CD4-positive, alpha-beta T cell (primary cell): ENCODE measurements at regions of chr2 and their contacts with region 1.

Region 1: GRCh38 chr2:33583194-33583938 is 15.7 kb downstream of the FAM98A start:
- DNase-seq: peak in 9 of 14 experiments; percentile 1 to 69 (median 18)
- ATAC-seq: peak; percentile 57
- H3K4me3 ChIP-seq: no peak overlapping the region
- H3K4me3 Mint-ChIP-seq: no peak overlapping the region
- H3K27ac ChIP-seq: no peak overlapping the region
- H3K27ac Mint-ChIP-seq: no peak overlapping the region
- H3K4me1 ChIP-seq: no peaks in the 10 kb centered on the region
- H3K4me1 Mint-ChIP-seq: peaks cover 11% of the 10 kb centered on the region
- H3K27me3 ChIP-seq: no peaks in the 10 kb centered on the region
- H3K27me3 Mint-ChIP-seq: no peaks in the 10 kb centered on the region
- CTCF ChIP-seq: peak; percentile 94

Region 2: DNA sequence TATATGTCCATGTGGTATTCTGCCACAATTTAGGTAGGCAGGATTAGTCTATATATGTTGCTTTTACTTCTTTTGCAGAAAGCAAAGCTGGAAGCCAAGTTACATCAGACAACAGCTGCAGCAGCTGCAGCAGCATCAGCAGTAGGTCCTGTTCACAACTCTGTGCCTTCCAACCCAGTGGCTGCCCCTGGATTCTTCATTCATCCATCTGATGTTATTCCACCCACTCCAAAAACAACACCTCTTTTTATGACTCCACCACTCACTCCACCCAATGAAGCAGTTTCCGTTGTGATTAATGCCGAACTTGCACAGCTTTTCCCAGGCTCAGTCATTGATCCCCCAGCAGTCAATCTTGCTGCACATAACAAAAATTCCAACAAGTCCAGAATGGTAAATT is 1118.9 kb before region 1 on chr2:
- CTCF ChIA-PET with region 1: no interaction called
- POLR2A ChIA-PET with region 1: no interaction called
- intact Hi-C with region 1: no loop called
- DNase-seq: no peak
- ATAC-seq: no peak
- H3K4me3 ChIP-seq: no peak overlapping the region
- H3K4me3 Mint-ChIP-seq: no peak overlapping the region
- H3K27ac ChIP-seq: no peak overlapping the region
- H3K27ac Mint-ChIP-seq: no peak overlapping the region
- H3K4me1 ChIP-seq: no peaks in the 10 kb centered on the region
- H3K4me1 Mint-ChIP-seq: no peaks in the 10 kb centered on the region
- H3K27me3 ChIP-seq: no peaks in the 10 kb centered on the region
- H3K27me3 Mint-ChIP-seq: no peaks in the 10 kb centered on the region
- CTCF ChIP-seq: no peak

Region 3: DNA sequence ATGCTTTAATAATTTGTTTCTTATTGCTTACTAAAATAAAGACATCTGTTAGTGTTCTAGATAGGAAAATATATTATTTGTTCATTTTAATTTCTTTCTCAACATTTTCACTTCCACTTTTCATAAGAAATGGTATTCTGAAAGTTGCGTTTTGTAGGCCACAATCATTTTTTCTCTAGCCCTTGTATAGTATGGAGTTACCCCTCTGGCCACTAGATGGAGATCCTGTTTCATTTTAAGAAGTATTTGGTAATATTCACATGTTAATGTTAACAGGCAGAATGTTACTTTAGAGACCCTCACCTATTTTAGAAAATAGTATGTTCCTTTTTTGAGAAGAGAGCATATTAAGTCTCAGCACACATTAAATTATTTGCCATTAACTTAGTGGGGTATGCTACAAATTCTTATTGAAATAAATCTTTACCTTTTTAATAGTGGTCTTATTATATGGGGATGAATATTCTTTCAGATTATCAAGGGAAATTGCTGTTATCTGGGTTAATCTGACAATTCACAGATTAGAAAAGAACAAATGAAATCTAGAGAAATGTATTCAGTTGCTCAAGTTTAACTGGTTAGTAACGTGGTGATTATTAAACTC is 1029.4 kb before region 1 on chr2:
- CTCF ChIA-PET with region 1: no interaction called
- POLR2A ChIA-PET with region 1: no interaction called
- intact Hi-C with region 1: loop called (anchors 1 to 5 kb)
- DNase-seq: peak in 3 of 14 experiments; percentile 47 to 60 (median 58)
- ATAC-seq: peak; percentile 61
- H3K4me3 ChIP-seq: no peak overlapping the region
- H3K4me3 Mint-ChIP-seq: no peak overlapping the region
- H3K27ac ChIP-seq: no peak overlapping the region
- H3K27ac Mint-ChIP-seq: no peak overlapping the region
- H3K4me1 ChIP-seq: no peaks in the 10 kb centered on the region
- H3K4me1 Mint-ChIP-seq: no peaks in the 10 kb centered on the region
- H3K27me3 ChIP-seq: no peaks in the 10 kb centered on the region
- H3K27me3 Mint-ChIP-seq: no peaks in the 10 kb centered on the region
- CTCF ChIP-seq: peak; percentile 77

Region 4: GRCh38 chr2:33372940-33373553 is 210.3 kb before region 1 on chr2:
- CTCF ChIA-PET with region 1: no interaction called
- POLR2A ChIA-PET with region 1: no interaction called
- intact Hi-C with region 1: loop called in 1 of 2 experiments (anchors 10 kb)
- DNase-seq: peak in 5 of 14 experiments; percentile 5 to 66 (median 46)
- ATAC-seq: no peak
- H3K4me3 ChIP-seq: no peak overlapping the region
- H3K4me3 Mint-ChIP-seq: no peak overlapping the region
- H3K27ac ChIP-seq: no peak overlapping the region
- H3K27ac Mint-ChIP-seq: no peak overlapping the region
- H3K4me1 ChIP-seq: no peaks in the 10 kb centered on the region
- H3K4me1 Mint-ChIP-seq: no peaks in the 10 kb centered on the region
- H3K27me3 ChIP-seq: no peaks in the 10 kb centered on the region
- H3K27me3 Mint-ChIP-seq: no peaks in the 10 kb centered on the region
- CTCF ChIP-seq: peak; percentile 69

Region 5: DNA sequence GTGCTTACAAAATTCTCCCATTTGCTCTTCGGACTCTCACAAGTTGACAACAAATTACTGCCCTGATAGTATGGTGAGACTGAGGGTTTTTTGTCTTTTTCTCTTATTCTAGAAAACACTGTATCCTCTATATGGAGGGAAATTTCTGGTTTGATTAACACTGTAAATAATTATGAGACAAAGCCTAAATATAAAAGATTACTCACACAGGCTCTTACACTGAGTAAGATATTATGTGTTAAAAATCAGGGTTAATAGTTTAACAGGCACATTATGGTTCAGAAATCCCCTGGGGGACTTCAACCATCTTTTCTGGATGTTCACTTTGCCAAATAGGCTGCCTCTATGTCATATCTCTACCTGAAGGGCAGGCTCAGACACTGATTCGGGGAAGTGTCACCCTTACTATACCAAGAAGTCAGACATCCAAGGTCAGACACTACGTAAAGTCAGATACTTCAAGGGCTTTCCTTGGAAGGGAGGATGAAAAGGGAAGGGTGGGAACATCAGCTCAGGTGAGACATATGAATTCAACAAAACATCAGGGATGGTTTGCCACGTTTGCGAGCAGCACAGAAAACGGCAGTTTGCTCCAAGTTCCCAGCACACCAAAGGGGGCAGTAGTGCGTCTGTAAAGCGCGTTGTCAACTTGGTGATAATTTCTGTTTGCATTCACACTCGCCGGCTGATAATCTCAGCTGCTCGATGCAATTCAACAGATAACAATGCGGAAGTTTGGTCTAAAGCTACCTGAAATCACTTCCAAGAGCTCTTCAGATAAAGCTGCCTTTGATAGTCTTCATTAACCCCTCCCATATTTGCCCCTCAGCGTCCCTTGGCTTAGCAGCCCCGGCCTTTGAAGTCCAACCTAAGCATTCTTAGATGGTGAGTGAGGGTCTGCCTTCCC is 107.9 kb before region 1 on chr2:
- CTCF ChIA-PET with region 1: interaction called, 10 read pairs
- POLR2A ChIA-PET with region 1: interaction called, 17 read pairs
- intact Hi-C with region 1: loop called (anchors 1 to 5 kb)
- DNase-seq: peak; percentile 65 to 93 (median 78)
- ATAC-seq: peak; percentile 79
- H3K4me3 ChIP-seq: peak overlapping the region; percentile 69
- H3K4me3 Mint-ChIP-seq: peak overlapping the region; percentile 96
- H3K27ac ChIP-seq: peak overlapping the region; percentile 87 to 92
- H3K27ac Mint-ChIP-seq: peak overlapping the region; percentile 97
- H3K4me1 ChIP-seq: peaks cover 15% of the 10 kb centered on the region
- H3K4me1 Mint-ChIP-seq: peaks cover 36% of the 10 kb centered on the region
- H3K27me3 ChIP-seq: no peaks in the 10 kb centered on the region
- H3K27me3 Mint-ChIP-seq: no peaks in the 10 kb centered on the region
- CTCF ChIP-seq: peak; percentile 90

Region 6: DNA sequence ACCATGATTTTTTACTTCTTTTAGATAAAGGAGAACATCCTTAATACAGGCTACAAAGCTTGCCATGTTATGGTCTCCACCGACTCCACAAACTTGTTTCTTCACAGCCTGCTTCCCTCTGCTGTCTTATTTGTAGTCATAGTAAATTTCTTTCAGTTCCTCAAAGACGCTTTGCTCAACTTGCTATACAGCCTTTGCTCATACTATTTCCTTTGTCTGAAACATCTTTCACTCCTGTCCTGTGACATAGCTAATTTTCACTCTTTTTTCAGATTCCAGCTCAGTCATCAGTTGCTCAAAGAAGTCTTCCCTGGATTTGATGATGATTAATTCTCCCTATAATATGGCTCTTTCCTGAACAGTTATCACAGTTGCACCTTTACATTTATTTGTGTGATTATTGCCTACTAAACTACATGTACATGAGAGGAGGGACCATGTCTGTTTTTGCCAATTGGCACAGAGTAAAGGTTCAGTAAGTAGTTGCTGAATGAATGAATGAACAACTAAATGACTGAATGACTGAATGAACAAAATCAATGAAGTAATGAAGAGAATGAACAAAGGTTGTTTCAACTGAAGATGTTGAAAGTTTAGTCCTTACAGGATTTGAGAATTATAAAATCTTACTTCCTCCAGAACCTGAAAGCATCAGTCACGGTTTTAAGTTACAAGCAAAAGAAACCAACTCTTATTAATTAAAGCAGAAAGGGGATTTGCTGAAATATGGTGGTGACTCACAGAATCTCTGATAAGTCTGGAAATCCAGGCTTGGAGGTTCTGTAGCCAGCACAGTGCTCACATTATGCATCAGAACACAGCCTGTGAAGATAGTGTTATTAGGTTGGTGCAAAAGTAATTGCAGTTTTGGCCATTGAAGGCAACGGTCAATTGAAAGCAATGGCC is 202.1 kb after region 1 on chr2:
- CTCF ChIA-PET with region 1: no interaction called
- POLR2A ChIA-PET with region 1: no interaction called
- intact Hi-C with region 1: no loop called
- DNase-seq: peak in 1 of 14 experiments; percentile 1
- ATAC-seq: no peak
- H3K4me3 ChIP-seq: no peak overlapping the region
- H3K4me3 Mint-ChIP-seq: no peak overlapping the region
- H3K27ac ChIP-seq: no peak overlapping the region
- H3K27ac Mint-ChIP-seq: no peak overlapping the region
- H3K4me1 ChIP-seq: no peaks in the 10 kb centered on the region
- H3K4me1 Mint-ChIP-seq: no peaks in the 10 kb centered on the region
- H3K27me3 ChIP-seq: no peaks in the 10 kb centered on the region
- H3K27me3 Mint-ChIP-seq: no peaks in the 10 kb centered on the region
- CTCF ChIP-seq: no peak